ENCODE measurements at regions of chr17 and their contacts with region 1.

Region 1: DNA sequence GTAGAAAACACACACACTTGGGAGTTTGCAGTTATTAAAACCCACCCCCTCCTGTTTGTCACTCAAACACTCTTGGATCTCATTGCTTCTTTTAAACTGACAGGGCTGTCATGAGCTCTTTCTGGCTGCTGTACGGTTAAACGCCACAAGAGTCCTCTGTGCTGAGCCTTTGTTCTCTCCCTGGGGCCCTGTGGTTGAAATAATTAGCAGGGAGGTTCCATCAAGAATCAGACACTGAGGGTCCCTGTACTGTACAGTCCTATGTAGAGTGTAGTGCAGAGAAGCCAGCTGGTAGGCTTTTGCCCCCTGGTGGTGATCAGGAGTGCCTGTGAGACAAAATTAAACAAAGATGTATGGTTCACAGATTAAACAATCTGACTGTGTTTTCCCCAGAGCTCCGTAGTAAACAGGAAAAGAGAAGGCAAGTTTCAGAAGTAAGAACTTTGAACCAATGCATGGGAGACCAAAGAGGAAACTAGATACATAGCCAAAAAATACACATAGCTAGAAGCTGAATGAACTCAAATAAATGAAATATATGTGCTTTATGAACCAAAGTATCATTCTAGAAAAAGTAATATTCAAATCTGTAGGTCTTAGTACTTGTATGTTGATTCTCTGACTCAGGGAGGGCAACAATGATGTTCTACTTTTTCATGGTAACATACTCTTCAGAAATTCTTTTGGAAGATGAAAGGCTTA is 1.4 kb upstream of the SSH2 start:
- DNase-seq: peak; percentile 82

Region 2: DNA sequence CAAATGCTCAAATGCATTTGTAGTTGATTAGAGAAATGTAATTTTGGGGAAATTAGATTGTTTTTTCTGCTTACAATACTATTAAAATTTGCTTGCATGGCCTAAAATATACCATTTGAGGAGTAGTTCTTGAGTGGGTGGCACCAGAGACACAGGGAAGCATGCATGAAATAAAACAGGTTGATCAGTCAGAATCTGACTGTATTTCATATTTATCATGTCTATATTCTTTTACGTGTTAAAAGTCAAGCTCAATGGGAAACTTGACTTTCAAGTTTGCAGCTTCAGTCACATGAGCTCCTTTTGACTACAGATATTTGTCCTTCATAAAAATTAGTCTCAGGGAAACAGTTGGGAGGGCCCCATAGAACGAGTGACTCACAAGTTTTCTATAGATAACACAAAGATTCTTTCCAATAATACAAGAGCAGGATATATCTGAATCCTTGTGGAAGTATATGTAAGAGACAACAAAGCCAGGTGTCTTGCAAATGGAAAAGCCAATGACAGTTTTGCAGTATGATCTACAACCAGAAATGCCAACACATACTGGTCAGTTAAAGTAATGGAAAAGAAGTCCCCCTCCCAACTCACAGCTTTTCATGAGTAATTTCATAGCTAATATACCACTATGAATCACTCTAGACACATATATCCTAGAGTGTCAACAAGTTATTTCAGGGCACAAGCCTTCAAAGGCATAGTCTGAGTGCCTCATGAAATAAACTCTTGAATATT is 266.5 kb before region 1 on chr17:
- in situ Hi-C with region 1: loop called (anchors 25 kb)
- DNase-seq: no peak

Region 3: DNA sequence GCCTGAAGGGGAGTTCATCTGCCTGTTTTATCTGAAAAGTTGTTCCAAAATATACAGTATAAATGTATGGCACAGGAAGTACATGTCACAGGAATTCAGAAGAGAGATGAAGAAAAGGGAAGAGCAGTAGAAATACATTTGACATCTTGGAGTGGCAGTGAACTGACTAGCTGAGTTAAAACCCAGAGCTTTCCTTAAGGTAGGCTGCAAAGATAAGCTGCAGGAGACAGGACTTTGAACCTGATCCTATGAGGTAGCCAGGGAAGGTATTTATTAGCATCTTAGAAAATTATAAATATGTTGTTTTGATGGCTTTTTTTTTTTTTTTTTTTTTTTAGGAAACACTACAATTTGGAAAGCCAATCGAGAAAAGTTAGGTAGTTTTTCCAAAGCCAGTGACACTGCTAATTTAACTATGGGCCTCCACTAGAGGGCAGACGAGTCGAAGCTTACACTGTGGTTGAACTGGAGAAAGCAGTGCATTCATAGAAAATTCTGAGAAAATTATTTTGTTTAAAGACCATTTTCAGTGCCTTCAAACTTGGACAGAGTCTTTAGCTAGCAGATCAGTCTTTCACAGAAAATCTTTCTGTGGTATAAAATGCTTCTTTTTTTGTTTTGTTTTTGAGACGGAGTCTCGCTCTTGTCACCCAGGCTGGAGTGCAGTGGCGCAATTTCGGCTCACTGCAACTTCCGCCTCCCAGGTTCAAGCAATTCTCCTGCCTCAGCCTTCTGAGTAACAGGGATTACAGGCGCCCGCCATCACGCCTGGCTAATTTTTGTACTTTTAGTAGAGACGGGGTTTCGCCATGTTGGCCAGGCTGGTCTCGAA is 123.6 kb before region 1 on chr17:
- in situ Hi-C with region 1: loop called (anchors 25 kb)
- DNase-seq: peak; percentile 77

Region 4: GRCh38 chr17:29833801-29834200 is 97.6 kb before region 1 on chr17:
- in situ Hi-C with region 1: no loop called
- DNase-seq: no peak

Region 5: DNA sequence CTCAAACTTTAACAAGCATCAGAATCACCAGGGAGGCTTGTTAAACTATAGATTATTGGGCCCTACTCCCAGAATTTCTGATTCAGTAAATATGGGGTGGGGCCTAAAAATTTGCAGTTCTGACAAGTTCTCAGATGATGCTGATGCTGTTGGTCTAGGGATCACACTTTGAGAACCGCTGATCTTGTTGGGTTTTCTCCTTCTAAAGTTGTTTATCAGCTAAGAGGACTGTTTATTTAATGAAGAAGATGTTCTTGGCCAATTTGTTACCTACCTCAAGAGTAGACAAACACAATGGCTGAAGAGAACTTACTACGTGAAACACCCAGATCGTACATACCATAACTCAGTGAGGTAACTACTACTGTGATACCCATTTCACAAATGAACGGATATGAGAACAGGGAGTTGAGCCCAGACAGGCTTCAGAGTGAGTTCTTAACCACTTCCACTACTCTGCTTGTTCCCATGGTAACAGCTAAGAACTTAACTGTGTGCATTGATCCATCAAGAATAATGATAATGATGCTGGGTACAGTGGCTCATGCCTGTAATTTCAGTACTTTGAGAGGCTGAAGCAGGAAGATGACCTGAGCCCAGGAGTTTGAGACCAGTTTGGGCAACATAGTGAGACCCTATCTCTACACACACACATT is 100.0 kb after region 1 on chr17:
- in situ Hi-C with region 1: loop called (anchors 25 kb)
- DNase-seq: no peak